PC-3 (cell line): ENCODE measurements at regions of chr11 and their contacts with region 1.

Region 1: GRCh38 chr11:66981976-66982578 is 7.0 kb downstream of the C11orf86 start:
- DNase-seq: peak; percentile 99
- ATAC-seq: peak; percentile 85
- H3K4me3 ChIP-seq: no peak overlapping the region
- H3K27ac ChIP-seq: peak overlapping the region; percentile 52
- H3K4me1 ChIP-seq: peaks cover 28% of the 10 kb centered on the region
- H3K27me3 ChIP-seq: no peaks in the 10 kb centered on the region
- CTCF ChIP-seq: no peak

Region 2: DNA sequence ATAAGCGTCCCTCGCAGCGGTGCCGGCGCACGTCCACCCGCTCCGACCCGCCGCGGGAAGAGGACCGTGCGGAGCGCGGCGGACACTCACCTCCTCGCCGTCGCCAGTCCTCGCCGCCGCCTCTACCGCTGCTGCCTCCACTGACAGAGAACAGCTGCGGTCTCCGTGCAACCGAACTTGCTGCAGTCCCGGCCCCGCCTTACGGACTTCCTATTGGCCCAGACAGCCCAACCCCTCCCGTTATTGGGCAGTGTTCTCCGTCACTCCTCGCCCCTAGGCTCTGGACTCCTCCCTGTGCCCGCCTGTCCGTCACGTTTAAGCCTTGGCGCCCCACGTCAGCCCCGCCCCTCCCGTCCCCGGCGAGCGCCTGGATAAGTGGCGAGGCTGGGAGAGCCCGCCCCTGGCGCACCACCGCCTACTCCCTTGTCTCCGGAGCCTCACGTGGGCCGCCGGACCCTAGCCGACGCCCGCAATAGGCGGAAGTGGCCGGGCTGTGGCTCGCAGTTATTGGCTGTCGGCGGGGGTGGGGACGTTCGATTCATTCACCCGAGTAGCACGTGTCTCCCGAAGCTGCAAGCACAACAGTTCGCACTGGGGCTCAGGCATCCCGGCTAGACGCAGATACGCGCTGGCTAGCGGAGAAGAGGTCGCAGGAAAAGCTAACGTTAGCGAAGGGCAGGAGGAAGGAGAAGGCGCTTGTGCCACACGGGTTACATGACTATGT is 23.7 kb before region 1 on chr11 and contains the start of gene PC:
- CTCF ChIA-PET with region 1: no interaction called
- POLR2A ChIA-PET with region 1: no interaction called
- intact Hi-C with region 1: loop called (anchors 1 kb)
- DNase-seq: peak; percentile 99
- ATAC-seq: peak; percentile 95
- H3K4me3 ChIP-seq: peak within 1 kb of the TSS; percentile 72
- H3K27ac ChIP-seq: peak within 1 kb of the TSS; percentile 8; the same call in 1 of the 2 replicates
- H3K4me1 ChIP-seq: peaks cover 15% of the 10 kb centered on the region
- H3K27me3 ChIP-seq: no peaks in the 10 kb centered on the region
- CTCF ChIP-seq: no peak
- total RNA-seq, gene PC: 24.5 and 39.7 TPM in 2 replicates

Region 3: GRCh38 chr11:66970808-66971442 is 11.2 kb before region 1 on chr11:
- CTCF ChIA-PET with region 1: no interaction called
- POLR2A ChIA-PET with region 1: no interaction called
- intact Hi-C with region 1: loop called (anchors 1 kb)
- DNase-seq: peak; percentile 99
- ATAC-seq: peak; percentile 91
- H3K4me3 ChIP-seq: peak overlapping the region; percentile 13; the same call in 1 of the 2 replicates
- H3K27ac ChIP-seq: peak overlapping the region; percentile 94
- H3K4me1 ChIP-seq: peaks cover 44% of the 10 kb centered on the region
- H3K27me3 ChIP-seq: no peaks in the 10 kb centered on the region
- CTCF ChIP-seq: no peak

Region 4: DNA sequence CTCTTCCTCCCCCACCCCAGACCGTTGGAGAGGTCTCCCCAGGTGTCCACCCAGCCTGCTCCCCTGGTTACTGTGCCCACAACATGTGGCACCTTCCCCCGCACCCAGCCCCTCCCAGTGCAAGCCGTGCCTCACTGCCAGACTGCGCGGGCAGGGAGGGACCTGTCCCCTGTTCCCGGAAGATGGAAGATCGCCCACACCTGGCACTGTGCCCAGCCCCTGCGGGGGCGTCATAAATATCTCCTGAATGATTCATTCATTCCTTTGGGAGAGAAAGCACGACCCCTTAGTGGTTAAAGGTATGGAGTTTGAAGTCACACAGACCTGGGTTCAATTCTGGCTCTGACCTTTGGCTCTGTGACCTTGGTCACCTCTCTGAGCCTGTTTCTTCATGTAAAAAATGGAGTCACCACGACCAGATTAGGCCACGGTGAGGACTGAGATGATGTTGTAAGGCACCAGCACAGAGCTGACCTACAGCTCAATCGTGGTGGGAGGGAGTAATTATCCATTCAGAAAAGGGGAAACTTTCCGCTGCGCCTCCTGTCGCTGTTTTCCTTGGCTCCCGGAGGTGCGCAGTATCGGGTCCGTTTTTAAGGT is 40.4 kb after region 1 on chr11:
- CTCF ChIA-PET with region 1: no interaction called
- POLR2A ChIA-PET with region 1: no interaction called
- intact Hi-C with region 1: no loop called
- DNase-seq: peak; percentile 96
- ATAC-seq: peak; percentile 45
- H3K4me3 ChIP-seq: peak overlapping the region; percentile 68
- H3K27ac ChIP-seq: no peak overlapping the region
- H3K4me1 ChIP-seq: peaks cover 31% of the 10 kb centered on the region
- H3K27me3 ChIP-seq: no peaks in the 10 kb centered on the region
- CTCF ChIP-seq: 0 out of 2 replicates have a peak, but pooled peaks have one; percentile 7

Region 5: DNA sequence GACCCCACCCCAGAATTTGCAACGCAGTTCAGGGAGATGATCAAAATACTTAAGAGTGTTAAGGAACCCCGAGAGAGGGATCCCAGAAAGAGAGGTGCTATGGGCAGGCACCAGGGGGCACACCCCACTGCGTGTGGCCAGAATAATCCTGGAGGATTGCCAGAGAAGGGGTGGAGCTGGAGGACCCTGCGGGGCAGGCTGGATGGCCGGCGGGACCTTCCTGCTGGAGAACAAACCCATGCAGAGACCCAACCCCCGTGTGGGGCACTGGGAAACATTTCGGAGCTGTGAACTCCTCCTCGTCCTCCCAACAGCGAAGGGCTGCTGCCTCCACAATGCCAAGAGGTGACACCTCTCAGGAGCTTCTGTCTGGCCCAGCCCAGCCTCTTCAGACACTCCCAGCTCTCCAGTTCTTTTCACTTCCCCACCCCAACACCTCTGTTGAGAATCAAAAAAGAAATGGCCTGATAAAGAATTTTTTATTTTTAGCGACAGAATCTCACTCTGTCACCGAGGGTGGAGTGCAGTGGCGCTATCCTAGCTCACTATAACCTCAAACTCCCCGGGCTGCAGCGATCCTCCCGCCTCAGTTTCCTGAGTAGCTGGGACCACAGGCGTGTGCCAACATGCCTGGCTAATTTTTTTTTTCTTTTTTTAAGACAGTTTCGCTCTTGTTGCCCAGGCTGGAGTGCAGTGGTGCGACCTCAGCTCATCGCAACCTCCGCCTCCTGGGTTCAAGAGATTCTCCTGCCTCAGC is 100.1 kb after region 1 on chr11:
- CTCF ChIA-PET with region 1: no interaction called
- POLR2A ChIA-PET with region 1: no interaction called
- intact Hi-C with region 1: no loop called
- DNase-seq: no peak
- ATAC-seq: no peak
- H3K4me3 ChIP-seq: no peak overlapping the region
- H3K27ac ChIP-seq: no peak overlapping the region
- H3K4me1 ChIP-seq: peaks cover 19% of the 10 kb centered on the region
- H3K27me3 ChIP-seq: no peaks in the 10 kb centered on the region
- CTCF ChIP-seq: no peak